T-cell (primary cell): ENCODE measurements at regions of chr17 and their contacts with region 1.

Region 1: DNA sequence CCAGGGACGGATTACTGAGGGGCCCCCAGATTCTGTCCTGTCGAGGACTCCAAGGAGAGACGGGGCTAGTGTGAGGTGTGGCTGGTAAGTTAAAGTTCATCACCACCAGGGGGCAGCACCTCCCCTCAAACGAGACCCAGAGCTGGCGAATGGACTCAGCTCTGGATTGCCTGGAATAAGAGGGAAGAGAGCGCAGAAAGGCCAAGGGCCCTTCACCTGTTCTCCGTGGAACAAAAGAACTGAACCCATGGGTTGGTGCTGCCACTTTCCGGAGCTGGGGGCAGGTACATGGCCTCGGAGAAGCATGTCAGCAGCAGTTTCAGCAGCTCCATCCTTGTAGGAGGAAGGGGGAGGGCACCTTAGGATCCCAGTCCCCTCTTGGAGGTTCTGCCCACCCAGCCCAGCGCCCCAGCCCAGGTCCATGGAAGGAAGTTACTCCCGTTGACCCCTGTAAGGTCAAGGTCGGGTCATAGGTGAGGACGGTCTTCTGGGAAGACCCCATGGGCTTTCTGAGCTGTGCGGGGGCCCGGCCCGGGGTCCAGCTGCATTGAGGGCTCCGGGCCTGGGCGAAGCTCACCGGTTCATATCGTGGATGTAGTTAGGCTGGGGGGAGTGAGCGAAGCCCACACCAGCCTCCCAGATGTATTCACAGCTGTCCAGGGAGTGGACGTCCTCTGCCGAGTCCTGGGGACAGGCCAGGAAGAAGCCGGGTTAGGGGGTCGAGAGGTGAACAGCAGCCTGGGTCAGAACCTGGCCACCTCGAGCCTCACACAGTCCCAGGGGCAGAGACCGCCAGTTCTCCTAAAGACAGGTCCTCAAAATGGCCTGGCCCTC is 10.7 kb downstream of the HID1 start:
- DNase-seq: peak; percentile 51 to 91 (median 77)
- ATAC-seq: peak; percentile 69 to 79 (median 72)
- H3K4me3 ChIP-seq: no peak overlapping the region
- H3K4me3 Mint-ChIP-seq: no peak overlapping the region
- H3K27ac ChIP-seq: no peak overlapping the region
- H3K27ac Mint-ChIP-seq: no peak overlapping the region
- H3K4me1 ChIP-seq: peaks cover 0 to 13% of the 10 kb centered on the region in 2 experiments
- H3K4me1 Mint-ChIP-seq: peaks cover 8 to 20% (median 9%) of the 10 kb centered on the region in 3 donors
- H3K27me3 ChIP-seq: peaks cover 0 to 24% of the 10 kb centered on the region in 2 experiments
- H3K27me3 Mint-ChIP-seq: no peaks in the 10 kb centered on the region

Region 2: DNA sequence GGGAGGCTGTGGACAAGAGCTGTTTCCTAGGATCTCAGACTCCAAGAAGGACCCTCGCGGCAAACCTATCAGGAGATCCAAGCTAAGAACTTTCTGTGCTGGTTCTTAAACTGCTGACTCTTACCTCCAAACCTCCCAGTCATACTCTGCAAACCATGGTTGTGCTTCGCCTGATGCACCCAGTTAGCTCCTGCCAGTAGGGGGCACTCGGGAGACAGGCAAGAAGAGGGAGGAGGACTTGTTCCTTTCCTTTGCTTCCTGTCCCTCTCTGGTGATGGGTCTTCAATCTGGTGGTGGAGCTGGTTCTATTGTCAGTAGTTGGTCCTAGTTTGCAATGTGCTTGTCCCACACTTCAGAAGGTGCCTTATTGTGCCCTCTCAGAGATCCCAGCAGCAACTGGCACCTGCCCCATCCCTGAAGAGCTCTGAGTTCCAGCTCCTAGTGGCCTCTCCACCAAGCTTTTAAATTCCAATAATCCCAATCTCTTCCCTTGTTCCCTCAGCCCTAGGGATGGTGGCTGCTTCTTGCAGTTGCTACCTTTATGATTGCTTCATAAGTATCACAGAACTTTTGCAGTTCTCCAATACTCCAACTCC is 871.9 kb before region 1 on chr17:
- CTCF ChIA-PET with region 1: no interaction called
- POLR2A ChIA-PET with region 1: no interaction called
- DNase-seq: peak in 10 of 35 experiments; percentile 5 to 25 (median 12)
- ATAC-seq: no peak
- H3K4me3 ChIP-seq: no peak overlapping the region
- H3K4me3 Mint-ChIP-seq: no peak overlapping the region
- H3K27ac ChIP-seq: no peak overlapping the region
- H3K27ac Mint-ChIP-seq: no peak overlapping the region
- H3K4me1 ChIP-seq: no peaks in the 10 kb centered on the region
- H3K4me1 Mint-ChIP-seq: no peaks in the 10 kb centered on the region
- H3K27me3 ChIP-seq: peaks cover 0 to 32% of the 10 kb centered on the region in 2 experiments
- H3K27me3 Mint-ChIP-seq: peaks cover 14 to 30% of the 10 kb centered on the region in 2 donors

Region 3: GRCh38 chr17:74883041-74883745 is 78.7 kb before region 1 on chr17:
- CTCF ChIA-PET with region 1: no interaction called
- POLR2A ChIA-PET with region 1: no interaction called
- DNase-seq: no peak
- ATAC-seq: no peak
- H3K4me3 ChIP-seq: no peak overlapping the region
- H3K4me3 Mint-ChIP-seq: no peak overlapping the region
- H3K27ac ChIP-seq: no peak overlapping the region
- H3K27ac Mint-ChIP-seq: no peak overlapping the region
- H3K4me1 ChIP-seq: no peaks in the 10 kb centered on the region
- H3K4me1 Mint-ChIP-seq: no peaks in the 10 kb centered on the region
- H3K27me3 ChIP-seq: peaks cover 0 to 57% of the 10 kb centered on the region in 2 experiments
- H3K27me3 Mint-ChIP-seq: peaks cover 13 to 28% of the 10 kb centered on the region in 2 donors

Region 4: DNA sequence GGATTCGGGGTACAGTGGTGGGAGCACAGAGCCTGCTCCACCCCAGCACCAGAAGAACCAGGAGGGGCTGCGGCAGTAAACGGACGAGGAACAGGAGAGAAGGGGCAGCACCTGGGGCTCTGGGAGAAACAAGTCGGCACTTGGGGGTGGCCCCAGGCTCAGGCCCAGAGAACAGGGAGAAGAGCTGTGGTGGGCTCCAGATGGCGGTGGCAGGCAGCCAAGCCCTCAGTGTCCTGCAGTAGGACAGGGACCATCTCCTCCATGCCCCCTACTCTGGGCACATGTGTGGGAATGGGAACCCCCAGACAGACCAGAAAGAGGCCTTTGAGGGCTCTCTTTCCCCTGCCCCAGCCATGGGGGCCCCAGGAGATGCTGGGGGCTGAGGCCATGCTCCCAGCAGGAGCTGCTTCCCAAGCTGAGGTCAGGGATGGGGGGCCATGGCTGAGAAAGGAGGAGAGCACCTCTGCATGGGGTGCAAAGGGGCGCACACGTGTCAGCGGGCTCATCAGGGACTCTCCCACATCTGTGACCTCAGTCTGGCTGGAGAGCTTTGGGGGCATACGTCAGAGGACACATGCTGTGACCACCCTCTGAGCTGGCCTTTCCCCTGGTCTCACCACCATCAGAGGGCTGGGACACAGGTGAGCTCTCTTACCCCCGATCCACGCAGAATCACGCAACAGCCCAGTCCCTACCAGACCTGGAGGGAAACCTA is 45.6 kb before region 1 on chr17:
- CTCF ChIA-PET with region 1: no interaction called
- POLR2A ChIA-PET with region 1: no interaction called
- DNase-seq: no peak
- ATAC-seq: no peak
- H3K4me3 ChIP-seq: no peak overlapping the region
- H3K4me3 Mint-ChIP-seq: no peak overlapping the region
- H3K27ac ChIP-seq: no peak overlapping the region
- H3K27ac Mint-ChIP-seq: no peak overlapping the region
- H3K4me1 ChIP-seq: peaks cover 0 to 5% of the 10 kb centered on the region in 2 experiments
- H3K4me1 Mint-ChIP-seq: peaks cover 0 to 2% (median 2%) of the 10 kb centered on the region in 3 donors
- H3K27me3 ChIP-seq: peaks cover 0 to 62% of the 10 kb centered on the region in 2 experiments
- H3K27me3 Mint-ChIP-seq: peaks cover 16 to 39% of the 10 kb centered on the region in 2 donors

Region 5: GRCh38 chr17:74987418-74987908 is 25.6 kb after region 1 on chr17 and contains the start of gene CDR2L:
- CTCF ChIA-PET with region 1: interaction called, 3 to 17 read pairs
- POLR2A ChIA-PET with region 1: no interaction called
- DNase-seq: peak; percentile 80 to 96 (median 89)
- ATAC-seq: peak; percentile 95 to 97 (median 96)
- H3K4me3 ChIP-seq: peak within 1 kb of the TSS; percentile 35 to 62
- H3K4me3 Mint-ChIP-seq: peak within 1 kb of the TSS; percentile 78 to 90 (median 85)
- H3K27ac ChIP-seq: no peak within 1 kb of the TSS
- H3K27ac Mint-ChIP-seq: peak within 1 kb of the TSS in 1 of 2 donors; percentile 23
- H3K4me1 ChIP-seq: peaks cover 6 to 18% of the 10 kb centered on the region in 2 experiments
- H3K4me1 Mint-ChIP-seq: peaks cover 7 to 16% (median 10%) of the 10 kb centered on the region in 3 donors
- H3K27me3 ChIP-seq: peaks cover 0 to 17% of the 10 kb centered on the region in 2 experiments
- H3K27me3 Mint-ChIP-seq: peaks cover 0 to 7% of the 10 kb centered on the region in 2 donors
- total RNA-seq, gene CDR2L: 0.12 to 0.29 (median 0.19) TPM in 4 of 5 donors, not detected in the other

Region 6: DNA sequence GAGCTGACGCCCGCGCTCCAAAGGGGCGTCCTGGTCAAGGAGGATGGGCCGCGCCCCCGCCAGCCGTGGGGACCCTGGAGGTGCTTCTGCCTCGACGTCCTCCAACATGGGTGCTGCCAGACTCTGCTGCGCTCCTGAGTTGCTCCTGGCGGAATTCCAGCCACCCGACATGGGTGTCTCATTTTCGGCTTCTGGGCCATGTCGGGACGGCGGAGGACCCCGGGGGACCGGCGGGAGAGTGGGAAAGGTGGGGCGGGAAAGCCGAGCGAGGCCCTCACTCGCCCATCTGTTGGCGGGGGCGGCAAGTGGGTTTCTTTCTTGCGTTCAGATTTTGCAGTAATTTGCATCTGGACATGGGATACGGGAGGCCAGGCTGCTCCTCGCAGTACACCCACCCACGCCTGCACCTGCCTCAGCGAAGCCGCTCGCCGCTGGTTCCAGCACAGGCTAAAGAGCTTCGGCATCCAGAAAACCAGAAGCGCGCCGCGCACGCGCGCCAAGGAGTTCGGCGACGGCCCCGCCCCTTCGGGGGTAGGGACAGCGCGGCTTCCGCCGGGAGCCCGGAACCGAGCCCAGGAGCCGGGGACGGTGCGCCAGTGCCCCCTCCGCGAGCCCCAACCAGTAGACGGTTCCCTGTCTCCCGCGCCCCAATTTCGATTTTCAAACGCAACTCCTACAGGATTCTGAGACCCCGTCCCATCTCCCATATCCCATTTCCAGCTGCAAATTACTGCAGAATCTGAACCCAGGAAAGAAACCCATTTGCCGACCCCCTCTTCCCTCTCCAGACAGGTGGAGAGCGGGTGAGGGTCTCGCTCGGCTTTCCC is 147.7 kb after region 1 on chr17 and contains the start of gene ARMC7:
- CTCF ChIA-PET with region 1: interaction called, 3 to 11 read pairs
- POLR2A ChIA-PET with region 1: interaction called in 1 of 2 experiments, 4 read pairs
- DNase-seq: peak; percentile 77 to 94 (median 86)
- ATAC-seq: peak; percentile 83 to 84 (median 84)
- H3K4me3 ChIP-seq: peak within 1 kb of the TSS; percentile 71 to 85
- H3K4me3 Mint-ChIP-seq: peak within 1 kb of the TSS; percentile 83 to 88 (median 87)
- H3K27ac ChIP-seq: peak within 1 kb of the TSS; percentile 65
- H3K27ac Mint-ChIP-seq: peak within 1 kb of the TSS; percentile 91 to 93
- H3K4me1 ChIP-seq: peaks cover 13 to 43% of the 10 kb centered on the region in 2 experiments
- H3K4me1 Mint-ChIP-seq: peaks cover 37 to 41% (median 39%) of the 10 kb centered on the region in 3 donors
- H3K27me3 ChIP-seq: no peaks in the 10 kb centered on the region
- H3K27me3 Mint-ChIP-seq: no peaks in the 10 kb centered on the region
- total RNA-seq, gene ARMC7: 8.9 to 23.9 (median 18.8) TPM

Region 7: GRCh38 chr17:75173526-75173925 is 211.7 kb after region 1 on chr17:
- CTCF ChIA-PET with region 1: interaction called, 4 to 10 read pairs
- POLR2A ChIA-PET with region 1: interaction called in 1 of 2 experiments, 5 read pairs
- DNase-seq: no peak
- ATAC-seq: no peak
- H3K4me3 ChIP-seq: no peak overlapping the region
- H3K4me3 Mint-ChIP-seq: no peak overlapping the region
- H3K27ac ChIP-seq: no peak overlapping the region
- H3K27ac Mint-ChIP-seq: peak overlapping the region in 1 of 2 donors; percentile 36
- H3K4me1 ChIP-seq: peaks cover 0 to 25% of the 10 kb centered on the region in 2 experiments
- H3K4me1 Mint-ChIP-seq: peaks cover 16 to 24% (median 23%) of the 10 kb centered on the region in 3 donors
- H3K27me3 ChIP-seq: no peaks in the 10 kb centered on the region
- H3K27me3 Mint-ChIP-seq: no peaks in the 10 kb centered on the region

Region 8: GRCh38 chr17:75205037-75205792 is 243.3 kb after region 1 on chr17 and contains the start of gene NUP85:
- CTCF ChIA-PET with region 1: interaction called in 1 of 2 experiments, 28 read pairs
- POLR2A ChIA-PET with region 1: no interaction called
- DNase-seq: peak; percentile 78 to 95 (median 89)
- ATAC-seq: peak; percentile 85 to 95 (median 92)
- H3K4me3 ChIP-seq: peak within 1 kb of the TSS; percentile 95 to 99
- H3K4me3 Mint-ChIP-seq: peak within 1 kb of the TSS; percentile 93 to 95 (median 94)
- H3K27ac ChIP-seq: peak within 1 kb of the TSS; percentile 91
- H3K27ac Mint-ChIP-seq: peak within 1 kb of the TSS; percentile 99 to 100
- H3K4me1 ChIP-seq: peaks cover 8 to 25% of the 10 kb centered on the region in 2 experiments
- H3K4me1 Mint-ChIP-seq: peaks cover 23 to 37% (median 32%) of the 10 kb centered on the region in 3 donors
- H3K27me3 ChIP-seq: no peaks in the 10 kb centered on the region
- H3K27me3 Mint-ChIP-seq: no peaks in the 10 kb centered on the region
- total RNA-seq, gene NUP85: 56.2 to 128 (median 106) TPM